Left cardiac atrium (tissue), 4 donors: ENCODE measurements at regions of chr1 and their contacts with region 1.

Region 1: GRCh38 chr1:16366722-16367257 is at the start of gene SZRD1:
- DNase-seq: peak; percentile 96
- ATAC-seq: peak; percentile 93 to 94
- total RNA-seq, gene SZRD1: 98.0 to 112 TPM

Region 2: GRCh38 chr1:15028102-15028501 is 1338.7 kb before region 1 on chr1:
- intact Hi-C with region 1: no loop called
- DNase-seq: peak; percentile 71
- ATAC-seq: peak; percentile 64 to 77

Region 3: GRCh38 chr1:16217061-16217785 is 149.6 kb before region 1 on chr1:
- intact Hi-C with region 1: loop called in 1 of 2 experiments (anchors 10 kb)
- DNase-seq: peak; percentile 99
- ATAC-seq: peak; percentile 99

Region 4: DNA sequence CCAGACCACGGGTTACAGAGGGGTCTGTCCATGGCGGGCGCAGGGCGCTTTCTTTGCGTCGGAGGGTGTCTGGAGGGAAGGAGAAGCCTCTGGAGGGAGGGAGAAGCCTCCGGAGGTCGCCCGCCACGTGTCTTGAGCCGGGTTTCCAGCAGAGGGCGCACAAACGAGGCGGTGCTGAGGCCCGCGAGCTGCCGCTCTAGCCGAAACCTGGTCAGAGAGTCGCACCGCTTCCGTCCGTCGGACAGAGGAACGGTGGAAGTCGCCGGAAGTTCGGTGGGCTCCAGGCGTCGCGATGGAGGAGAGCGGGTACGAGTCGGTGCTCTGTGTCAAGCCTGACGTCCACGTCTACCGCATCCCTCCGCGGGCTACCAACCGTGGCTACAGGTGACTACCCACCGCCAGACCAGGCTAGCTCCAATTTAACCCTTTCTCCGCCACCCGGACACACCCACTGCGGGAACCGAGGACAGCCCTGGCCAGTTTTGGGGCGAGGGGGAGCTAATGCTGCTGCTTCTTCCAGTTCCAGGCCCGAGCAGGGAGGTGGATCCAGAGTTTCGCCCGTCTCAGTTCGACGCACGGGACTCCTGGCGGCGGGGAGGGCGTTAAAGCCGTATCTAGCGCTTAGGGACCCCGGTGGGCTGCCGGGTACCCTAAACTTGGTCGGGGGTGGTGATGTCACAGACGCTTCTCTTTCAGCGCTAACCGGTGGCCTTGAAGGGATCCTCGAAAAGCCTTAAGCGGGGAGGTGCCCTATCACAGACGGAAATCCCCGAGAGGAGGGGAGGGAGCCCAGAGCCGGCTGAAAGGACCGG is 73.9 kb after region 1 on chr1 and contains the start of gene NECAP2:
- intact Hi-C with region 1: loop called in 1 of 2 experiments (anchors 2 kb)
- DNase-seq: peak; percentile 96
- ATAC-seq: peak; percentile 94 to 96
- total RNA-seq, gene NECAP2: 21.8 to 23.7 TPM